ENCODE measurements at regions of chr16 and their contacts with region 1.

Region 1: GRCh38 chr16:84754353-84754856 is 54.6 kb downstream of the USP10 start:
- DNase-seq: peak; percentile 78 to 88 (median 81)
- H3K4me3 ChIP-seq: peak overlapping the region; percentile 6 to 68 (median 33)
- H3K4me3 Mint-ChIP-seq: peak overlapping the region; percentile 58 to 86
- H3K27ac ChIP-seq: peak overlapping the region; percentile 63 to 92
- H3K27ac Mint-ChIP-seq: peak overlapping the region; percentile 65 to 97 (median 88)
- H3K4me1 ChIP-seq: peaks cover 66 to 72% of the 10 kb centered on the region in 2 donors
- H3K4me1 Mint-ChIP-seq: peaks cover 71% of the 10 kb centered on the region
- H3K27me3 ChIP-seq: no peaks in the 10 kb centered on the region
- H3K27me3 Mint-ChIP-seq: no peaks in the 10 kb centered on the region
- CTCF ChIP-seq: peak; percentile 88

Region 2: DNA sequence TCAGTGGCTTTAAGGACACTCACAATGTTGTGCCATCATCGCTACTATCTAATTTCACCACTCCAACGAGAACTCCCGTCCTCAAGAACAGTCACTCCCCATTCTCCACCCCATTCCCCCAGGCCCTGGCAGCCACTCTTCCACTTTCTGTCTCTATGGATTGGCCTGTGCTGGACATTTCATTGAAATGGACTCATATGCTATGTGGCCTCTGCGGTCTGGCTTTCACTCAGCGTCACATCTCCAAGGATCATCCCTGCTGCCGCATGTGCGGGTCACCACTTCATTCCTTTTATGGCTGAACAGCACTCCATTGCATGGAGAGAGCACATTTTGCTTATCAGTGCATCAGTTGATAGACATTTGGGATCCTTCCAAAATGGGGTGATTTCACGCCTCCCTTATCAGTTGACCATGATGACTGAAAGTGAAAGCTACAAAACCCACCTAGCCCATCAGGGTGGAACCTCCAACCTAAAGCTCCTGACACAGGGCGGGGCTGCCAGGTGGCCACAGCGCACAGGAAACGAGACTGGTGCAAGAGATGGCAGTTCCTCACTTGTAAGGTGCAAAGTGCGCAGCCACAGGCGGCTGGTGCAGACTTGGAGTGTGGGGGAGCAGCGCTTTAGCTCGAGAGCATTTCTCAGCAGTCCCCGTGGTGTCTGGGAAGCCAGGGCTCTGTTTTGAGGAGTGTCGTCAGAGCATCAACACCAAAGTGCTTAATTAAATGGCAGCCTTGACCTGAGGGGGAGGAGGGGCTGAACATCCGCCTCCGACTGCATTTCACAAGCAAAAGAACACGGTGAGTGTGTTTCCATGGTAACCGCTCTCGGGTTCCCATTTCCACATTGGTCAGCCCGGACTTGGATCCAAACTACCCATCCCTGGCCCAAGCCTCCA is 160.3 kb before region 1 on chr16:
- intact Hi-C with region 1: no loop called
- DNase-seq: peak; percentile 65 to 81 (median 77)
- H3K4me3 ChIP-seq: peak overlapping the region in 1 of 3 experiments; percentile 21
- H3K4me3 Mint-ChIP-seq: peak overlapping the region in 1 of 2 donors; percentile 50
- H3K27ac ChIP-seq: peak overlapping the region; percentile 55 to 99
- H3K27ac Mint-ChIP-seq: peak overlapping the region; percentile 88 to 100 (median 92)
- H3K4me1 ChIP-seq: peaks cover 53 to 55% of the 10 kb centered on the region in 2 donors
- H3K4me1 Mint-ChIP-seq: peaks cover 53% of the 10 kb centered on the region
- H3K27me3 ChIP-seq: no peaks in the 10 kb centered on the region
- H3K27me3 Mint-ChIP-seq: peaks cover 0 to 7% (median 0%) of the 10 kb centered on the region in 3 donors
- CTCF ChIP-seq: no peak

Region 3: GRCh38 chr16:84738255-84739038 is 16.0 kb before region 1 on chr16:
- intact Hi-C with region 1: loop called in 1 of 2 experiments (anchors 1 kb)
- DNase-seq: peak; percentile 75 to 82 (median 80)
- H3K4me3 ChIP-seq: peak overlapping the region; percentile 17 to 70 (median 53)
- H3K4me3 Mint-ChIP-seq: peak overlapping the region; percentile 80 to 86
- H3K27ac ChIP-seq: peak overlapping the region in 1 of 2 donors; percentile 77
- H3K27ac Mint-ChIP-seq: peak overlapping the region; percentile 64 to 90 (median 85)
- H3K4me1 ChIP-seq: peaks cover 59 to 62% of the 10 kb centered on the region in 2 donors
- H3K4me1 Mint-ChIP-seq: peaks cover 51% of the 10 kb centered on the region
- H3K27me3 ChIP-seq: no peaks in the 10 kb centered on the region
- H3K27me3 Mint-ChIP-seq: peaks cover 0 to 2% (median 0%) of the 10 kb centered on the region in 3 donors
- CTCF ChIP-seq: peak; percentile 99

Region 4: GRCh38 chr16:84819644-84820324 is 65.4 kb after region 1 on chr16 and contains the start of gene CRISPLD2:
- intact Hi-C with region 1: loop called in 1 of 2 experiments (anchors 5 kb)
- DNase-seq: peak; percentile 92 to 93 (median 93)
- H3K4me3 ChIP-seq: peak within 1 kb of the TSS; percentile 51 to 89 (median 81)
- H3K4me3 Mint-ChIP-seq: peak within 1 kb of the TSS; percentile 86 to 98
- H3K27ac ChIP-seq: peak within 1 kb of the TSS in 1 of 2 donors; percentile 66
- H3K27ac Mint-ChIP-seq: peak within 1 kb of the TSS; percentile 50 to 93 (median 81)
- H3K4me1 ChIP-seq: peaks cover 57 to 59% of the 10 kb centered on the region in 2 donors
- H3K4me1 Mint-ChIP-seq: peaks cover 71% of the 10 kb centered on the region
- H3K27me3 ChIP-seq: peaks cover 0 to 5% of the 10 kb centered on the region in 2 donors
- H3K27me3 Mint-ChIP-seq: peaks cover 0 to 16% (median 10%) of the 10 kb centered on the region in 3 donors
- CTCF ChIP-seq: no peak
- polyA plus RNA-seq, gene CRISPLD2: 40.7 to 90.4 (median 69.0) TPM

Region 5: GRCh38 chr16:84952335-84953189 is 198.2 kb after region 1 on chr16:
- intact Hi-C with region 1: loop called (anchors 1 to 5 kb)
- DNase-seq: peak; percentile 76 to 84 (median 81)
- H3K4me3 ChIP-seq: peak overlapping the region in 1 of 3 experiments; percentile 23
- H3K4me3 Mint-ChIP-seq: peak overlapping the region; percentile 63 to 67
- H3K27ac ChIP-seq: no peak overlapping the region
- H3K27ac Mint-ChIP-seq: peak overlapping the region in 2 of 7 donors; percentile 25 to 26
- H3K4me1 ChIP-seq: peaks cover 21 to 36% of the 10 kb centered on the region in 2 donors
- H3K4me1 Mint-ChIP-seq: peaks cover 33% of the 10 kb centered on the region
- H3K27me3 ChIP-seq: peaks cover 0 to 3% of the 10 kb centered on the region in 2 donors
- H3K27me3 Mint-ChIP-seq: peaks cover 0 to 6% (median 0%) of the 10 kb centered on the region in 3 donors
- CTCF ChIP-seq: peak; percentile 90

Region 6: DNA sequence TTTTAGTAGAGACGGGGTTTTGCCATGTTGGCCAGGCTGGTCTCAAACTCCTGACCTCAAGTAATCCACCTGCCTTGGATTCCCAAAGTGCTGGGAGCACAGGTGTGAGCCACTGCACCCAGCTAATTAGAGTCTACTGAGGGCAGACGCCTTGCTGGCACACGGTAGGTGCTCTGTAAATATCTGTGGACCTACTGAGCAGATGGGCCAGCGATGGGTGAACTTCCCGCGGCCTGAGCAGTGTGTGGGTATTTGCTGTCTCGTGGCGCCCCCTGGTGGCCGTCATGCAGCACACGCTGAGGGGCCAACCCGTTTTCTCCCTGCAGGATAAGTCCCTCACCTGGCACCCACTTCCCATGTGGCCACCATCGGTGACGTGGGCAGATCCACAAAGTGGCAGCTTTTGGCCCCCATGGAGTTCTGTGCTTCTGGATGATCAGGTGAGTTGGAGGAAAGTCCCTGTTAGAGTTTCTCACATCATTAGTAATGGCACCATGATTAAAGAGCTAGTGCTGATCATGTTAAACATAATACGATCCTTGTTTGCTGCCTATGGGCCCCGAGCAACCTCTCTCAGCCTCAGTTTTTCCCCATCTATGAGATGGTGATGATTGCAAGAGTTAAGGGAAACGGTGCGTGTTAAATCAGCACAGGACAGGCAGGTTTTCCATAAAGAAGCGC is 216.2 kb after region 1 on chr16:
- intact Hi-C with region 1: loop called in 1 of 2 experiments (anchors 5 kb)
- DNase-seq: peak; percentile 74 to 85 (median 76)
- H3K4me3 ChIP-seq: no peak overlapping the region
- H3K4me3 Mint-ChIP-seq: no peak overlapping the region
- H3K27ac ChIP-seq: no peak overlapping the region
- H3K27ac Mint-ChIP-seq: peak overlapping the region in 1 of 7 donors; percentile 50
- H3K4me1 ChIP-seq: peaks cover 21 to 30% of the 10 kb centered on the region in 2 donors
- H3K4me1 Mint-ChIP-seq: peaks cover 30% of the 10 kb centered on the region
- H3K27me3 ChIP-seq: no peaks in the 10 kb centered on the region
- H3K27me3 Mint-ChIP-seq: peaks cover 2 to 9% (median 4%) of the 10 kb centered on the region in 3 donors
- CTCF ChIP-seq: peak; percentile 95

Region 7: GRCh38 chr16:85086347-85087291 is 332.2 kb after region 1 on chr16:
- intact Hi-C with region 1: loop called in 1 of 2 experiments (anchors 10 kb)
- DNase-seq: peak; percentile 61 to 63 (median 63)
- H3K4me3 ChIP-seq: no peak overlapping the region
- H3K4me3 Mint-ChIP-seq: no peak overlapping the region
- H3K27ac ChIP-seq: peak overlapping the region in 1 of 2 donors; percentile 50
- H3K27ac Mint-ChIP-seq: peak overlapping the region in 1 of 7 donors; percentile 2
- H3K4me1 ChIP-seq: peaks cover 39 to 56% of the 10 kb centered on the region in 2 donors
- H3K4me1 Mint-ChIP-seq: peaks cover 52% of the 10 kb centered on the region
- H3K27me3 ChIP-seq: no peaks in the 10 kb centered on the region
- H3K27me3 Mint-ChIP-seq: peaks cover 0 to 6% (median 1%) of the 10 kb centered on the region in 3 donors
- CTCF ChIP-seq: peak; percentile 75